CD4-positive, alpha-beta memory T cell (primary cell): ENCODE measurements at regions of chr2 and their contacts with region 1.

Region 1: DNA sequence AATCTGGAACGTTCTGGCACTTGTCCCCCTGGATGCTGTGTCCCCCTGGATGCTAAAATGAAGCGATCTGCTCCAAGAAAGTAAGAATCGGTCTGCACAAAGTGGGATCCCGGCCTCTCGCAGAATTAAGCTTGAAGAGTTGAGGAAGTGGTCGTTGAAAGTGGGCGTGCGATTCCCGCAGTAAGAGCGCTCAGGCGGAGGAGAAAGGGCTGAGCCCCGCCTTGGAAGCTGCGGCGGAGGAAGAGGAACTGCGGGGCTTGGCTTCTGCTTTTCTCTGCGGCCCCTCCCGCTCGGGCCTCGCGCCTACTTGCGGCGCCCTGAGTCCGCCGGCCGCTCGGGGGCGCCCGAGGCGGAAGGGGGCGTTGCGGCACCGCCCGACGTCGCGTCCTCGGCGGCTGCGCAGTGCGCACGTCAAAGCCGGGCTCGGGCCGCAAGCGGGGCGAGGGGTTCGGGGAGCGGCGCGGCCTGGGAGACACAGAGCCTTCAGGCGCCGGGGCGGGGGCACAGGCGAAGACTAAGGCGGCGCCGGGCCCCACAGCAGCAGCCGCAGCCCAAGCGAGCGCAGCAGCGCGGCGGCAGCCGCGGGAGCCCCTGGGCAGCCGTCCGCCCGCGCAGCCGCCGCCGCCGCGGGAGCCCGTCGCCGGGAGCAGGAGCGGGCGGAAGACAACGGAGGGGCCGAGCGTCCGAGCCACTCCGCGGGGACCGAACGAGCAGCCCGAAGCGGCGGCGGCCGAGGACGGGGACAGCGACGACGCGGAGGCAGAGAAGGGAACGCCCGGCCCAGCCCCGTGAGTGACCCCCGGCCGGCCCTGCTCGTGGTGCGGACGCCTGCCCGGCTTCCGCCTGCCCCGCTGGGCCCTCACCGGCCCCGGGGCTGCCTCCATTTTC is at the start of gene CAB39:
- DNase-seq: peak; percentile 83 to 91 (median 89)
- H3K4me3 ChIP-seq: peak within 1 kb of the TSS; percentile 86 to 94
- H3K4me3 Mint-ChIP-seq: peak within 1 kb of the TSS; percentile 95 to 99 (median 96)
- H3K27ac ChIP-seq: peak within 1 kb of the TSS; percentile 80
- H3K27ac Mint-ChIP-seq: peak within 1 kb of the TSS; percentile 92 to 99 (median 96)
- H3K4me1 ChIP-seq: peaks cover 37% of the 10 kb centered on the region
- H3K4me1 Mint-ChIP-seq: peaks cover 23 to 49% (median 38%) of the 10 kb centered on the region in 4 donors
- H3K27me3 ChIP-seq: no peaks in the 10 kb centered on the region
- H3K27me3 Mint-ChIP-seq: no peaks in the 10 kb centered on the region
- total RNA-seq, gene CAB39: 112 to 115 TPM

Region 2: GRCh38 chr2:230225486-230225885 is 487.2 kb before region 1 on chr2 and contains the start of gene SP140:
- CTCF ChIA-PET with region 1: no interaction called
- POLR2A ChIA-PET with region 1: interaction called, 6 read pairs
- intact Hi-C with region 1: loop called (anchors 5 kb)
- DNase-seq: peak; percentile 86 to 97 (median 88)
- H3K4me3 ChIP-seq: peak within 1 kb of the TSS; percentile 39 to 68
- H3K4me3 Mint-ChIP-seq: peak within 1 kb of the TSS; percentile 88 to 97 (median 90)
- H3K27ac ChIP-seq: peak within 1 kb of the TSS; percentile 79
- H3K27ac Mint-ChIP-seq: peak within 1 kb of the TSS; percentile 96 to 99 (median 97)
- H3K4me1 ChIP-seq: peaks cover 60% of the 10 kb centered on the region
- H3K4me1 Mint-ChIP-seq: peaks cover 47 to 77% (median 56%) of the 10 kb centered on the region in 4 donors
- H3K27me3 ChIP-seq: no peaks in the 10 kb centered on the region
- H3K27me3 Mint-ChIP-seq: no peaks in the 10 kb centered on the region
- total RNA-seq, gene SP140: 70.8 to 79.3 TPM

Region 3: GRCh38 chr2:230411570-230412370 is 300.9 kb before region 1 on chr2:
- CTCF ChIA-PET with region 1: no interaction called
- POLR2A ChIA-PET with region 1: no interaction called
- intact Hi-C with region 1: loop called (anchors 10 kb)
- DNase-seq: peak; percentile 61 to 74 (median 66)
- H3K4me3 ChIP-seq: peak overlapping the region; percentile 83 to 89
- H3K4me3 Mint-ChIP-seq: peak overlapping the region; percentile 97 to 100 (median 100)
- H3K27ac ChIP-seq: peak overlapping the region; percentile 88
- H3K27ac Mint-ChIP-seq: peak overlapping the region; percentile 96 to 100 (median 99)
- H3K4me1 ChIP-seq: peaks cover 67% of the 10 kb centered on the region
- H3K4me1 Mint-ChIP-seq: peaks cover 41 to 91% (median 62%) of the 10 kb centered on the region in 4 donors
- H3K27me3 ChIP-seq: no peaks in the 10 kb centered on the region
- H3K27me3 Mint-ChIP-seq: no peaks in the 10 kb centered on the region

Region 4: GRCh38 chr2:230505162-230505561 is 207.5 kb before region 1 on chr2:
- CTCF ChIA-PET with region 1: no interaction called
- POLR2A ChIA-PET with region 1: no interaction called
- intact Hi-C with region 1: no loop called
- DNase-seq: no peak
- H3K4me3 ChIP-seq: no peak overlapping the region
- H3K4me3 Mint-ChIP-seq: no peak overlapping the region
- H3K27ac ChIP-seq: no peak overlapping the region
- H3K27ac Mint-ChIP-seq: peak overlapping the region in 1 of 7 donors; percentile 37
- H3K4me1 ChIP-seq: no peaks in the 10 kb centered on the region
- H3K4me1 Mint-ChIP-seq: peaks cover 0 to 1% (median 0%) of the 10 kb centered on the region in 4 donors
- H3K27me3 ChIP-seq: no peaks in the 10 kb centered on the region
- H3K27me3 Mint-ChIP-seq: no peaks in the 10 kb centered on the region

Region 5: GRCh38 chr2:230658877-230659652 is 53.6 kb before region 1 on chr2:
- CTCF ChIA-PET with region 1: interaction called, 12 read pairs
- POLR2A ChIA-PET with region 1: interaction called, 26 read pairs
- intact Hi-C with region 1: loop called (anchors 1 kb)
- DNase-seq: peak in 2 of 5 donors; percentile 41 to 73
- H3K4me3 ChIP-seq: peak overlapping the region; percentile 20 to 45
- H3K4me3 Mint-ChIP-seq: peak overlapping the region; percentile 47 to 84 (median 78)
- H3K27ac ChIP-seq: peak overlapping the region; percentile 54
- H3K27ac Mint-ChIP-seq: peak overlapping the region; percentile 70 to 96 (median 92)
- H3K4me1 ChIP-seq: peaks cover 89% of the 10 kb centered on the region
- H3K4me1 Mint-ChIP-seq: peaks cover 64 to 94% (median 79%) of the 10 kb centered on the region in 4 donors
- H3K27me3 ChIP-seq: no peaks in the 10 kb centered on the region
- H3K27me3 Mint-ChIP-seq: no peaks in the 10 kb centered on the region

Region 6: DNA sequence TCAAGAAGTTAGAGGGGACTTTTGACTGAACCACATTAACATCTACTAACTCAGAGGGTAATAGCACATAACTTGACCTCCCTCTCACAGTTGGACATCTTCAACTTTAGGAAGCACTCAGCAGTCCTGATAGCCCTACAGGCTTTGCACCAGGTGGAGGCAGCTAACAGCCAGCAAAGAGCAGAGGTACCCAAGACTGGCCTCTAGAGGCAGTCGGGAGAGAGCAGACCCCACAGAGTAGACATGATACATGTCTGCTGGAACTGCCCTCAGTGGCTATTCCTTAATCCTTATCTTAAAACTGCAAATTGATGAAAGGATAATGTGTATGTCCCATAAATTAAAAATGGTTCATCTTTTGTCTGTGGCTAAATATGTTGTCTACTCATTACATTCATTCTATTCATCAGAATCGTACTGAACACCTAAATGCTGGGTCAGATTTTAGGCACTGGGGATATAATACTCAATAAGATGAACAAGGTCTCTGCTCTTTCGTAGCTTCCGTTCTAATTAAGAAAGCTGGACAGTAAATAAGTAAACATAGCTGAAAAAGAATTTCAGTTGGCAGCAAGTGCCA is 49.7 kb after region 1 on chr2:
- CTCF ChIA-PET with region 1: interaction called, 21 read pairs
- POLR2A ChIA-PET with region 1: interaction called, 17 read pairs
- intact Hi-C with region 1: loop called (anchors 5 kb)
- DNase-seq: peak in 2 of 5 donors; percentile 19 to 26
- H3K4me3 ChIP-seq: no peak overlapping the region
- H3K4me3 Mint-ChIP-seq: peak overlapping the region in 1 of 8 donors; percentile 26
- H3K27ac ChIP-seq: no peak overlapping the region
- H3K27ac Mint-ChIP-seq: peak overlapping the region in 4 of 7 donors; percentile 0 to 62 (median 28)
- H3K4me1 ChIP-seq: peaks cover 43% of the 10 kb centered on the region
- H3K4me1 Mint-ChIP-seq: peaks cover 47 to 65% (median 55%) of the 10 kb centered on the region in 4 donors
- H3K27me3 ChIP-seq: no peaks in the 10 kb centered on the region
- H3K27me3 Mint-ChIP-seq: no peaks in the 10 kb centered on the region

Region 7: DNA sequence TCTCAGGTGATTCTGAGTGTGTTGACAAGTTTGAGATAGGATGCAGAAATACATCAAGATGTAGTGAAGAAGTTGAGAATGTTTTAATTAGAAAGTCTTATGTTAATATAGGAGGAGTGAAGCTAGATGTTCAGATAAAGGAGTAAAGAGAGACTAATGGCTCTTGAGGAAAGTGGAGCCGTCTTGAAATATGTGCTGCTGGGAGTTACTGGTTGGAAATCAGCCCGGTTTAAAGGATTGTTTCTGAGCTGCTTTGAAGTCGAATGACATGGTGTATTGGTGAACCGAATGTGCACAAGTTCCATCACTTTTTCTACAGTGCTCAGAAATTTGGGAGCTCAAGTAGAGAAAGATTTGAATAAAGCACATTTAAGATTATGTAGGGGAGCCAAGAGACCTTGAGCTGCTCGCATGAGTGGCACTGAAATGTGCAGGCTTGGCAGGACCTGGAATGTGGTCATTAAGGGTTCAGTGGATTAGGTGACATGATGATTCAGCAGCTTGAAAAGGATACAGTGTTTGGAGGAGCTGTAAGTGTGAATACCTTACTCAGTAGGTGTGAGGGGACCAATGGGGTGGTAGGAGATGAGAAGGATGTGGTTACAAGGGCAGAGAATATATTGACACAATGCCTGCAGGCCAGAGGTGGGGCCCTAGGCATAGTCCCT is 68.6 kb after region 1 on chr2:
- CTCF ChIA-PET with region 1: interaction called, 16 read pairs
- POLR2A ChIA-PET with region 1: interaction called, 39 read pairs
- intact Hi-C with region 1: no loop called
- DNase-seq: peak; percentile 59 to 83 (median 64)
- H3K4me3 ChIP-seq: no peak overlapping the region
- H3K4me3 Mint-ChIP-seq: peak overlapping the region in 6 of 8 donors; percentile 13 to 60 (median 34)
- H3K27ac ChIP-seq: peak overlapping the region; percentile 33
- H3K27ac Mint-ChIP-seq: peak overlapping the region; percentile 14 to 93 (median 64)
- H3K4me1 ChIP-seq: peaks cover 78% of the 10 kb centered on the region
- H3K4me1 Mint-ChIP-seq: peaks cover 60 to 81% (median 72%) of the 10 kb centered on the region in 4 donors
- H3K27me3 ChIP-seq: no peaks in the 10 kb centered on the region
- H3K27me3 Mint-ChIP-seq: no peaks in the 10 kb centered on the region

Region 8: DNA sequence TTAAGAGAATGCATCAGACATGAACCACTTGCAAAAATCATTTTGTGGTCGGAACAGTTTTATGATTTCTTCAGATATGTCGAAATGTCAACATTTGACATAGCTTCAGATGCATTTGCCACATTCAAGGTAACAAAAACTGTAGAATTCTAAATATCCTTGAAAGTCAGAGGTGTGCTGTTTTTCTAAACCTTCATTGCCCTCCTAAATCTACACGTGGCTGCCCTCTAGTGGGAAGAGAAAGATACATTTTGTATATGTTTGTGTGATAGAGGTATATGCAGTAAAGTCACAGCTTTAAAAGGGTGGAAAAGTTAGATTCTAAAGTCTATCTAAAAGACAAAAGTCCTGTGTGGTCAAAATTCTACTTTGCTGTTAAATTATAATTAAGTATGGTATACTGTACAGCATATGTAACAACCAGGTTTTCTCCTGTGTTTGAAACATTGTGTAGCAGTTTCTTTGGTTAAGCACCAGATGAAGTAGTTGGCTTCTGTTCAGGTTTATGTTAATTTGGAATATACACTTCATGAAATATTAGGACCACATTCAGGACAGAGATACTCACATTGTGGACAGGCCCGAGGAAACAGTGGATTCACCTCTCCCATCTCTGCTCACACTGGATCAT is 86.2 kb after region 1 on chr2:
- CTCF ChIA-PET with region 1: interaction called, 70 read pairs
- POLR2A ChIA-PET with region 1: interaction called, 70 read pairs
- intact Hi-C with region 1: loop called (anchors 1 kb)
- DNase-seq: peak; percentile 57 to 71 (median 64)
- H3K4me3 ChIP-seq: no peak overlapping the region
- H3K4me3 Mint-ChIP-seq: peak overlapping the region in 1 of 8 donors; percentile 47
- H3K27ac ChIP-seq: peak overlapping the region; percentile 8
- H3K27ac Mint-ChIP-seq: peak overlapping the region in 3 of 7 donors; percentile 7 to 62 (median 43)
- H3K4me1 ChIP-seq: peaks cover 53% of the 10 kb centered on the region
- H3K4me1 Mint-ChIP-seq: peaks cover 20 to 26% (median 23%) of the 10 kb centered on the region in 4 donors
- H3K27me3 ChIP-seq: no peaks in the 10 kb centered on the region
- H3K27me3 Mint-ChIP-seq: no peaks in the 10 kb centered on the region